Mucosa of descending colon (tissue), 3 donors: ENCODE measurements at regions of chr14 and their contacts with region 1.

Region 1: GRCh38 chr14:102096214-102097114 is 9.6 kb upstream of the HSP90AA1 start:
- DNase-seq: peak; percentile 75 to 96 (median 90)
- ATAC-seq: peak; percentile 86
- H3K4me3 ChIP-seq: no peak overlapping the region
- H3K4me1 ChIP-seq: peaks cover 3% of the 10 kb centered on the region
- CTCF ChIP-seq: peak; percentile 54

Region 2: DNA sequence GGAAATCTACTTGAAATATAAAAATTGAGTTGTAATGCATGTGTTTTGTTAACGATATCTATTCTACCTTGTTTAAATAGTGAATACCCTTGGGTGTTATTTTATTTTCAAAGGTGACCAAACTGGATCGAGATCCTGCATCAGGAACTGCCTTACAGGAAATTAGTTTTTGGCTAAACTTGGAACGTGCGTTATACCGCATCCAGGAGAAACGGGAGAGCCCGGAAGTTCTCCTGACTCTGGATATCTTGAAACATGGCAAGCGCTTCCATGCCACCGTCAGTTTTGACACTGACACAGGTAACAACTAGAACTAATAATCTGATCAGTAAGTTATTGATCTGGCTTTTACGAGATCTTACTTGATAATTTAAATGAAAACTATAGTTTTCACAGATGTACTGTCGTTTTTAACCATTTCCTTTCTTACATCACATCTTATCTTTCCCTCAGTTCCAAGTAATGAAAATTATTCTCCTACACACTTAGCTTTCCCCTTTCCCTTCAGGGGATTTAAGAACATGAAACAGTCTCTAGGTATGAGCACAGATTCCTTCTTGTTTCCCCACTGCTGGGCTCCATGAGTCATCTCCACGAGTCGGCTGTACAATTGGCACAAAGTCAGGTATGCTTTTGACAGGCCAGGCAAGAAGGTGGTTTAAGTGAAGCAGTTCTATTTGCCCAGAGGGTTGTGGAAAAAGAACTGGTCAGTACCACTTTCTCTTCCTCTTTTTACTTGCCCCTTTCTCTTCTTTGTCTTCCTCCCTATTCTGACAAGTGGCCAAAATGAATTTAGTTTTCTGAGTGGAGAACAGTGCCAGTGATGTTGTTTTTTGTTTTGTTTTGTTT is 116.0 kb before region 1 on chr14:
- intact Hi-C with region 1: loop called in 1 of 2 experiments (anchors 10 kb)
- DNase-seq: no peak
- ATAC-seq: peak; percentile 28
- H3K4me3 ChIP-seq: no peak overlapping the region
- H3K4me1 ChIP-seq: no peaks in the 10 kb centered on the region
- CTCF ChIP-seq: no peak

Region 3: GRCh38 chr14:102046343-102047278 is 49.9 kb before region 1 on chr14:
- intact Hi-C with region 1: loop called (anchors 10 kb)
- DNase-seq: peak; percentile 89 to 92 (median 89)
- ATAC-seq: peak; percentile 98
- H3K4me3 ChIP-seq: no peak overlapping the region
- H3K4me1 ChIP-seq: peaks cover 2% of the 10 kb centered on the region
- CTCF ChIP-seq: peak; percentile 40

Region 4: GRCh38 chr14:102220031-102220430 is 123.6 kb after region 1 on chr14:
- intact Hi-C with region 1: no loop called
- DNase-seq: no peak
- ATAC-seq: peak; percentile 39
- H3K4me3 ChIP-seq: no peak overlapping the region
- H3K4me1 ChIP-seq: peaks cover 4% of the 10 kb centered on the region
- CTCF ChIP-seq: no peak

Region 5: GRCh38 chr14:102333795-102334705 is 237.6 kb after region 1 on chr14:
- intact Hi-C with region 1: no loop called
- DNase-seq: no peak
- ATAC-seq: no peak
- H3K4me3 ChIP-seq: no peak overlapping the region
- H3K4me1 ChIP-seq: no peaks in the 10 kb centered on the region
- CTCF ChIP-seq: no peak